GM12878 (cell line): ENCODE measurements at regions of chr3 and their contacts with region 1.

Region 1: GRCh38 chr3:61530355-61530754 is 31.0 kb upstream of the PTPRG start:
- DNase-seq: no peak
- ATAC-seq: peak; percentile 81
- H3K4me3 ChIP-seq: no peak overlapping the region
- H3K27ac ChIP-seq: no peak overlapping the region
- H3K4me1 ChIP-seq: no peaks in the 10 kb centered on the region
- H3K27me3 ChIP-seq: no peaks in the 10 kb centered on the region
- CTCF ChIP-seq: peak; percentile 51 to 53 (median 52)
- EP300 ChIP-seq: no peak
- POLR2A ChIP-seq: no peak
- RAD21 ChIP-seq: peak; percentile 54

Region 2: GRCh38 chr3:61371123-61371522 is 159.2 kb before region 1 on chr3:
- CTCF ChIA-PET with region 1: interaction called, 10 read pairs
- POLR2A ChIA-PET with region 1: no interaction called
- RAD21 ChIA-PET with region 1: interaction called, 11 read pairs
- SMC1A ChIA-PET with region 1: interaction called, 24 read pairs
- in situ Hi-C with region 1: no loop called
- intact Hi-C with region 1: no loop called
- DNase-seq: no peak
- ATAC-seq: peak; percentile 88
- H3K4me3 ChIP-seq: no peak overlapping the region
- H3K27ac ChIP-seq: no peak overlapping the region
- H3K4me1 ChIP-seq: no peaks in the 10 kb centered on the region
- H3K27me3 ChIP-seq: peaks cover 0 to 1% of the 10 kb centered on the region in 2 experiments; a peak in 1 of 4 replicates
- CTCF ChIP-seq: peak; percentile 66 to 73 (median 69)
- EP300 ChIP-seq: no peak
- POLR2A ChIP-seq: no peak
- RAD21 ChIP-seq: peak; percentile 73

Region 3: DNA sequence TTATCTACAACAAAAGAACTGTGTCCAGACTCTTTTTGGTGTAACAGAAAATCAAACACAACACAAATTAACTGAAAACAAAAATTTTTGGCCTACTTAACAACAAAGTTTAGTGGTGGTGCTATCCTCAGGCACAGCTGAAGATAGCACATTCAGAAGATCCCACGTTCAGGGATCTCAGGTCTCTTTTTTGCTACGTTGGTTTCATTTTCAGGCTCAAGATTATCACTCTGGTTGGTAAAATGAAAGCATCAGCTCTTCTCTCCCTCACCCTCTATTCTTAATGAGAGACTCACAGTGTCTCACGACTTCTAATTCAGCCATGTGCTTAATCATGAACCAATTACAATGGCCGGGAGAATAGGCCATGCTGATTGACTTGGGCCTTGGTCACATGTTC is 115.9 kb before region 1 on chr3:
- CTCF ChIA-PET with region 1: interaction called, 29 read pairs
- POLR2A ChIA-PET with region 1: interaction called, 3 read pairs
- RAD21 ChIA-PET with region 1: interaction called, 5 read pairs
- SMC1A ChIA-PET with region 1: interaction called, 9 read pairs
- in situ Hi-C with region 1: no loop called
- intact Hi-C with region 1: no loop called
- DNase-seq: no peak
- ATAC-seq: peak; percentile 92
- H3K4me3 ChIP-seq: no peak overlapping the region
- H3K27ac ChIP-seq: no peak overlapping the region
- H3K4me1 ChIP-seq: peaks cover 5% of the 10 kb centered on the region; the same call in 1 of the 2 replicates
- H3K27me3 ChIP-seq: no peaks in the 10 kb centered on the region
- CTCF ChIP-seq: no peak
- EP300 ChIP-seq: no peak
- POLR2A ChIP-seq: no peak
- RAD21 ChIP-seq: no peak

Region 4: GRCh38 chr3:61442696-61443095 is 87.7 kb before region 1 on chr3:
- CTCF ChIA-PET with region 1: interaction called, 26 read pairs
- POLR2A ChIA-PET with region 1: no interaction called
- RAD21 ChIA-PET with region 1: interaction called, 18 read pairs
- SMC1A ChIA-PET with region 1: interaction called, 27 read pairs
- in situ Hi-C with region 1: no loop called
- intact Hi-C with region 1: no loop called
- DNase-seq: no peak
- ATAC-seq: no peak
- H3K4me3 ChIP-seq: no peak overlapping the region
- H3K27ac ChIP-seq: no peak overlapping the region
- H3K4me1 ChIP-seq: no peaks in the 10 kb centered on the region
- H3K27me3 ChIP-seq: no peaks in the 10 kb centered on the region
- CTCF ChIP-seq: no peak
- EP300 ChIP-seq: no peak
- POLR2A ChIP-seq: no peak
- RAD21 ChIP-seq: no peak

Region 5: DNA sequence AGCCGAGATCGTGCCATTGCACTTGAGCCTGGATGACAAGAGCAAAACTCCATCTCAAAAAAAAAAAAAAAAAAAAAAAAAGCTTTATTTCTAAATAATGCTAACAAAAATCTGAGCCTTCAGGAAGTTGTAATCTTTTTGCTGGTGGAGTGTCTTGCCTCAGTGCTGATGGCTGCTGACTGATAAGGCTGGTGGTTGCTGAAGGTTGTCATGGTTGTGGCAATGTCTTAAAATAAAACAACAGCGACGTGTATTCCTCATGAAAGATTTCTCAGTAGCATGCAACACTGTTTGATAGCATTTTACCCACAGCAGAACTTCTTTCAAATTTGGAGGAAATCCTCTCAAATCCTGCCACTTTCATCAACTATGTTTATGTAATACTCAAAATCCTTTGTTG is 46.4 kb before region 1 on chr3:
- CTCF ChIA-PET with region 1: interaction called, 11 read pairs
- POLR2A ChIA-PET with region 1: no interaction called
- RAD21 ChIA-PET with region 1: interaction called, 6 read pairs
- SMC1A ChIA-PET with region 1: interaction called, 4 read pairs
- in situ Hi-C with region 1: no loop called
- intact Hi-C with region 1: no loop called
- DNase-seq: no peak
- ATAC-seq: no peak
- H3K4me3 ChIP-seq: no peak overlapping the region
- H3K27ac ChIP-seq: no peak overlapping the region
- H3K4me1 ChIP-seq: no peaks in the 10 kb centered on the region
- H3K27me3 ChIP-seq: no peaks in the 10 kb centered on the region; a peak in 1 of 4 replicates
- CTCF ChIP-seq: no peak
- EP300 ChIP-seq: no peak
- POLR2A ChIP-seq: no peak
- RAD21 ChIP-seq: no peak

Region 6: GRCh38 chr3:61505197-61505596 is 25.2 kb before region 1 on chr3:
- CTCF ChIA-PET with region 1: interaction called, 15 read pairs
- POLR2A ChIA-PET with region 1: no interaction called
- RAD21 ChIA-PET with region 1: interaction called, 7 read pairs
- SMC1A ChIA-PET with region 1: interaction called, 23 read pairs
- in situ Hi-C with region 1: no loop called
- intact Hi-C with region 1: no loop called
- DNase-seq: no peak
- ATAC-seq: no peak
- H3K4me3 ChIP-seq: no peak overlapping the region
- H3K27ac ChIP-seq: no peak overlapping the region
- H3K4me1 ChIP-seq: no peaks in the 10 kb centered on the region
- H3K27me3 ChIP-seq: no peaks in the 10 kb centered on the region
- CTCF ChIP-seq: no peak
- EP300 ChIP-seq: no peak
- POLR2A ChIP-seq: no peak
- RAD21 ChIP-seq: no peak

Region 7: GRCh38 chr3:62188681-62189383 is 658.5 kb after region 1 on chr3:
- CTCF ChIA-PET with region 1: interaction called, 19 read pairs
- POLR2A ChIA-PET with region 1: no interaction called
- RAD21 ChIA-PET with region 1: interaction called, 7 read pairs
- SMC1A ChIA-PET with region 1: interaction called, 6 read pairs
- in situ Hi-C with region 1: no loop called
- intact Hi-C with region 1: no loop called
- DNase-seq: no peak
- ATAC-seq: peak; percentile 89
- H3K4me3 ChIP-seq: no peak overlapping the region
- H3K27ac ChIP-seq: no peak overlapping the region
- H3K4me1 ChIP-seq: no peaks in the 10 kb centered on the region
- H3K27me3 ChIP-seq: no peaks in the 10 kb centered on the region
- CTCF ChIP-seq: peak; percentile 71 to 82 (median 76)
- EP300 ChIP-seq: no peak
- POLR2A ChIP-seq: no peak
- RAD21 ChIP-seq: peak; percentile 78

Region 8: GRCh38 chr3:62529201-62529600 is 998.8 kb after region 1 on chr3:
- CTCF ChIA-PET with region 1: no interaction called
- POLR2A ChIA-PET with region 1: no interaction called
- RAD21 ChIA-PET with region 1: no interaction called
- SMC1A ChIA-PET with region 1: no interaction called
- in situ Hi-C with region 1: no loop called
- intact Hi-C with region 1: no loop called
- DNase-seq: no peak
- ATAC-seq: no peak
- H3K4me3 ChIP-seq: no peak overlapping the region
- H3K27ac ChIP-seq: no peak overlapping the region
- H3K4me1 ChIP-seq: no peaks in the 10 kb centered on the region
- H3K27me3 ChIP-seq: no peaks in the 10 kb centered on the region
- CTCF ChIP-seq: no peak
- EP300 ChIP-seq: no peak
- POLR2A ChIP-seq: no peak
- RAD21 ChIP-seq: no peak